ENCODE measurements at regions of chr11 and their contacts with region 1.

Region 1: GRCh38 chr11:4187055-4187988 is 92.7 kb downstream of the RRM1 start:
- DNase-seq: peak; percentile 80
- H3K4me3 Mint-ChIP-seq: peak overlapping the region; percentile 73
- H3K27ac Mint-ChIP-seq: no peak overlapping the region
- H3K4me1 Mint-ChIP-seq: no peaks in the 10 kb centered on the region
- H3K27me3 Mint-ChIP-seq: no peaks in the 10 kb centered on the region
- CTCF ChIP-seq: peak; percentile 99

Region 2: GRCh38 chr11:3626308-3626951 is 560.9 kb before region 1 on chr11:
- CTCF ChIA-PET with region 1: no interaction called
- POLR2A ChIA-PET with region 1: no interaction called
- intact Hi-C with region 1: no loop called
- DNase-seq: no peak
- H3K4me3 Mint-ChIP-seq: no peak overlapping the region
- H3K27ac Mint-ChIP-seq: no peak overlapping the region
- H3K4me1 Mint-ChIP-seq: no peaks in the 10 kb centered on the region
- H3K27me3 Mint-ChIP-seq: no peaks in the 10 kb centered on the region
- CTCF ChIP-seq: no peak

Region 3: DNA sequence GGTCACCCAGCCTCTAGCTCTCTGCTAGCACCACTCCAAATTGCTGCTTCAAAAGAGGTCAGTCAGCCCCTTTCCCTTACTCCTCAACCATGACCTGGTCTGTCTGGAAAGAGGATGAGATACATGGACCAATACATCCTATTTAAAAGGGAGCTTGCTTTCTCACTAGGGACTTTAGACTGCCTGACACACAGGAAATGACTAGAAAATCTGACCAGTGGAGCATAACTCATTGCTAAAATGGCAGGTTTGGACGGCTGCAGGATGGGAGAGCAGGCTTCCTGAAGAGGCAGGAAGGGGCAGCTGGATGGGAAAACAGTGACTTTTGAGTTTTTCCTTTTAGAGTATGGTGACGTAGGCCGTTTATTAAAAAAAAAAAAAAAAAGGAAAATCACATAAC is 306.6 kb before region 1 on chr11:
- CTCF ChIA-PET with region 1: no interaction called
- POLR2A ChIA-PET with region 1: no interaction called
- intact Hi-C with region 1: no loop called
- DNase-seq: no peak
- H3K4me3 Mint-ChIP-seq: no peak overlapping the region
- H3K27ac Mint-ChIP-seq: no peak overlapping the region
- H3K4me1 Mint-ChIP-seq: peaks cover 18% of the 10 kb centered on the region
- H3K27me3 Mint-ChIP-seq: no peaks in the 10 kb centered on the region
- CTCF ChIP-seq: no peak

Region 4: GRCh38 chr11:4211991-4212390 is 24.7 kb after region 1 on chr11:
- CTCF ChIA-PET with region 1: interaction called, 45 read pairs
- POLR2A ChIA-PET with region 1: interaction called, 3 read pairs
- intact Hi-C with region 1: no loop called
- DNase-seq: no peak
- H3K4me3 Mint-ChIP-seq: no peak overlapping the region
- H3K27ac Mint-ChIP-seq: no peak overlapping the region
- H3K4me1 Mint-ChIP-seq: no peaks in the 10 kb centered on the region
- H3K27me3 Mint-ChIP-seq: peaks cover 37% of the 10 kb centered on the region
- CTCF ChIP-seq: no peak

Region 5: GRCh38 chr11:4539603-4540219 is 352.4 kb after region 1 on chr11:
- CTCF ChIA-PET with region 1: interaction called, 183 read pairs
- POLR2A ChIA-PET with region 1: interaction called, 3 read pairs
- intact Hi-C with region 1: loop called (anchors 1 kb)
- DNase-seq: peak; percentile 65
- H3K4me3 Mint-ChIP-seq: no peak overlapping the region
- H3K27ac Mint-ChIP-seq: no peak overlapping the region
- H3K4me1 Mint-ChIP-seq: peaks cover 10% of the 10 kb centered on the region
- H3K27me3 Mint-ChIP-seq: no peaks in the 10 kb centered on the region
- CTCF ChIP-seq: peak; percentile 65

Region 6: DNA sequence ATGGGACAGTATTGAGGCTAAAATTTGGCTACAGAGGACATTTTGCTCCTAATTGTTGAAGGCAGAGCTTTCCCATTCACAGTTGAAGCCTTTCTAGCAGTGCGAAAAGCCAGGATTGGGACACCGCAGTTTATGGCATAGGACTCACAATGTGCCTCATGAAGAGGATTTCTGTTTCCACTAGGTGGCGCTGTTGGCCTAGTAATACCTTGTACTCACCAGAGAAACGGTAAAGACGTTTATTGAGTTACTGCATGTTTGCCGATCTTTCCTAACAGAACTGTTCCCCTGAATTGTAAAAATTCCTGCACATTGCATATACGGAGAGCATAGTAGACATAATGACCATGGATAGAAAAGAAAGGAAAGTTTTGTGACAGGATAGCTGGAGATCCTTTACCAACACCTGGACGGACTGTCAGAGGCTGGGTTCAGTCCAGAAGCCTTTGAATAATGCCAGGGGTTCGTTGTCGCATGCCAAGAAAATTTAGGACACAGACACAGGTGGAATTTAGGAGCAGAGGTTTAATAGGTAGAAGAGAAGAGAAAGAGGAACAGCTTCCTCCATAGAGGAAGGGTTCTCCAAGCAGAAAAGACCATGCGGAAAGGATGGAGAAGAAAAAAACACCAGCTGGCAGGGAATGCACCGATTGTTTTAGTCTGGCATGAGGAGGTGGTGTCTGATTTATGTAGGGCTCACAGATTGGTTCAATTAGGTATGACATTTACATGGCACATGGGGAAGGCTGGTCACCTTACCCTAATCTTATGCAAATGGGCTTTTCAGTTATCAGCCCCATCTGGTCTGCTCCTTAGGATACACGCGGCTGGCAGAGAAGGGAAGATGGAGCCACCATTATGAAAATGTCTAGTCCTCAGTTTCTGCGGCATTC is 439.1 kb after region 1 on chr11:
- CTCF ChIA-PET with region 1: interaction called, 21 read pairs
- POLR2A ChIA-PET with region 1: no interaction called
- intact Hi-C with region 1: loop called (anchors 2 kb)
- DNase-seq: peak; percentile 88
- H3K4me3 Mint-ChIP-seq: no peak overlapping the region
- H3K27ac Mint-ChIP-seq: no peak overlapping the region
- H3K4me1 Mint-ChIP-seq: no peaks in the 10 kb centered on the region
- H3K27me3 Mint-ChIP-seq: peaks cover 45% of the 10 kb centered on the region
- CTCF ChIP-seq: peak; percentile 73

Region 7: DNA sequence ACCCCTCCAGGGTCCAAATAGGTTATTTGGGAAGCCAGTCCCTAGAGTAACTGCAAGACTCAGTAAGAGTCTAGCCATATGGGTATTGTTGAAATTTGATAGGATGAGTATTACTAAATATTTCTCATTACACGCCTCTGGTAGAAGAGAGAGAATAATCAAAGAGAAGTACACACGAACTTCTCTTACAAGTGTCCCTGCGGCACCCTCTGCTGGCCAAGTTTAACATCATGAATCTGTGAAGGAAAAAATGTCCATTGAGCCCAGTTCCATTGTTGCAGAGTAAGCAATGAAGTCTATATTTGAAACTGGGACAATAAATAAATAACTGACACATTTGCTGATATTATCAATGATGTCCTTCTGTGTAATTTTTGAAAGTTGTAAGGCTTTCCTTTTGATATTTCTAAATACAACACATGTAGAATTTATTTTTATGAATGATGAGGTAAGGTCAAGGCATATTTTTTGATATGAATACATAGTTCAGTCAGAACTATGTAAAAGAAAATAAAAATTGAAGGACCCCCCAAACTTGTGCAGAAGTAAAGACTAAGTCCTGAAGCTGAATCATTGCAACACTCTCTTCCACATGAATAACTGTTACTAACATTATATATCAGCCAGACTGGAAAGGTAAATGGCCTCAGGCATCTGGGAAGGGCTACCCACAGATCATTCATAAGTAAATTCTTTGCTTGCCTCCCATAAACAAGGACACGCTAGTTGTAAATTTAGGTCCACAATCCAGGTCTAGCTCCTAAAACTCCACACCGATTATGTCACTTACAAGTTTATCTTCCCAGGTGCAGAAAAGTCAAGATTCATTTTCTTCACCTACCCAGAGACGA is 817.3 kb after region 1 on chr11:
- CTCF ChIA-PET with region 1: interaction called, 3 read pairs
- POLR2A ChIA-PET with region 1: no interaction called
- intact Hi-C with region 1: loop called (anchors 2 kb)
- DNase-seq: peak; percentile 71
- H3K4me3 Mint-ChIP-seq: no peak overlapping the region
- H3K27ac Mint-ChIP-seq: no peak overlapping the region
- H3K4me1 Mint-ChIP-seq: no peaks in the 10 kb centered on the region
- H3K27me3 Mint-ChIP-seq: peaks cover 42% of the 10 kb centered on the region
- CTCF ChIP-seq: peak; percentile 72

Measured in MCF 10A (cell line).